ENCODE measurements at regions of chr22 and their contacts with region 1.

Region 1: DNA sequence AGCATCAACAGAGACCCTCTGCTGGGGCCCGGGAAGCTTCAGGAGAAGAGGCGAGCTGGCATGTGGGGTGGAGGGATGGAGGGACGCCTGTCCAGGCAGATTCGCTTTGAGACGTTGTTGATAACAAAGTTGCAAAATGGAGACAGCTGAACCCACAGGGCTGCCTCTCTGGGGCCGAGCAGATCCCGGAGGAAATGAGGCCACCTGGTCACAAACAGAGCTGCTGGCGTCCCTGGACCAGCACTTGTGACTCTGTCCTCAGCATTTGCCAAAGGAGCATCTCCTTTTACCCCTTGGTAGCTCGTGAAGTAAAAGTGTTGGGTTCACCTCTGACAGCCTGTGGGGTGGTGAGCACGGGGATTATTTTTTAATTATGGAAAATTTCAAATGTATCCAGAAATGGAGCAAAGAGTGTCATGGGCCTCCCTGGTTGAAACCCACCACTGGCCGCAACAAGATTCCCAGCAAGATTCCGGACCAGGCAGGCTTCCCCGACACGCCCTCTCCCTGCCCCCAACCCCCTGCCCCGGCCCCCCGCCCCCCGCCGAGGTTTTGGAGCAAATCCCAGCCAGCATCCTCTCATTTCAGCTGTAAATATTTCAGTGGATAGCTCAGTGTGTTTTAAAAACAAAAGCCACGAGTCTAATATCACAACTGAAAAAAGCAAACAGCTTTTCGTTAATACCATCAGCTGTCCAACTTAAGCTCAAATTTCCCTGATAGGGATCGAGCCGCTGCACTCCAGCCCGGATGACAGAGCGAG is 20.3 kb downstream of the GRAMD4 start:
- DNase-seq: no peak
- H3K4me3 ChIP-seq: no peak overlapping the region
- H3K27ac ChIP-seq: no peak overlapping the region
- H3K4me1 ChIP-seq: peaks cover 4% of the 10 kb centered on the region
- H3K27me3 ChIP-seq: no peaks in the 10 kb centered on the region
- CTCF ChIP-seq: no peak

Region 2: DNA sequence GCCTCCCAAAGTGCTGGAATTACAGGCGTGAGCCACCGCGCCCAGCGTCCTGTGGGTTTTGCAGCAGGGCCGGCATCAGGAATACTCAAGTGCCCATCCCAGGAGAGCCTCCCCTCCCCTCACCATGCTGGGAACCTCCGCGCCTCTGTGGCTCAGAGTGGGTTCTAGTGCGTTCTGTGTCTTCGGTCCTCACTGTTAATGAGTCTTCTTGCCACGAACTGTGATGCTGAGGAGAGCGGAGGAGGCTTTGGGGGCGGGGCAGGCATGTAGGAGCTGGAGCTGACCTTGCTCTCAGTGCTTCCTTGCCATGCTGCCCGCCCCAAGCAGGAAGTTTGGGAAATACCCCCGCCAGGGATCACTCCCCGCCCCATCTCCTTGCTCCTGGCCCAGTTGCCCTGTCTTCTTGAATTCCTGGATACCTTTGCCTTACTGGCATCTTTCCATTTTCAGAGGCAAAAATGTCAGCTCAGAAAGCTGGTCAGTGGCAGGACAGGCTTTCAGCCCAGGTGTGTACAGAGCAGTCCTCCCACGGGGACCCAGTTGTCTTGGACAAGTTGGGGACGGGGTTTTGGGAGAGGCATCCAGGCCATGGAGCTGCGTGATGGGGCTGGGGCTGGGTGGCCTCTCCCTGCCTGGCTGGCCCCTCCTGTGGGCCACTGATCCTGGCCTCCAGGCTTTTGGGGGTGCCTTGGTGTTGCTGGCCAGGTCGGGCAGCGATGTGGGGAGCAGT is 15.2 kb before region 1 on chr22:
- CTCF ChIA-PET with region 1: interaction called, 5 read pairs
- POLR2A ChIA-PET with region 1: interaction called, 11 read pairs
- intact Hi-C with region 1: no loop called
- DNase-seq: no peak
- H3K4me3 ChIP-seq: no peak overlapping the region
- H3K27ac ChIP-seq: no peak overlapping the region
- H3K4me1 ChIP-seq: peaks cover under 1% of the 10 kb centered on the region
- H3K27me3 ChIP-seq: no peaks in the 10 kb centered on the region
- CTCF ChIP-seq: no peak